Activated T-helper 1 cell treated with anti-CD3 and anti-CD28 coated beads, Interleukin-12 subunit alpha, Interleukin-12 subunit beta, Interleukin-2, Interleukin-4 antibody, amounts not matched to agents 30 ng/mL and 10 ng/mL and 1 ng/mL, durations not matched to agents 14 hours and 24 hours and 36 hours (primary cell): ENCODE measurements at regions of chr6 and their contacts with region 1.

Region 1: DNA sequence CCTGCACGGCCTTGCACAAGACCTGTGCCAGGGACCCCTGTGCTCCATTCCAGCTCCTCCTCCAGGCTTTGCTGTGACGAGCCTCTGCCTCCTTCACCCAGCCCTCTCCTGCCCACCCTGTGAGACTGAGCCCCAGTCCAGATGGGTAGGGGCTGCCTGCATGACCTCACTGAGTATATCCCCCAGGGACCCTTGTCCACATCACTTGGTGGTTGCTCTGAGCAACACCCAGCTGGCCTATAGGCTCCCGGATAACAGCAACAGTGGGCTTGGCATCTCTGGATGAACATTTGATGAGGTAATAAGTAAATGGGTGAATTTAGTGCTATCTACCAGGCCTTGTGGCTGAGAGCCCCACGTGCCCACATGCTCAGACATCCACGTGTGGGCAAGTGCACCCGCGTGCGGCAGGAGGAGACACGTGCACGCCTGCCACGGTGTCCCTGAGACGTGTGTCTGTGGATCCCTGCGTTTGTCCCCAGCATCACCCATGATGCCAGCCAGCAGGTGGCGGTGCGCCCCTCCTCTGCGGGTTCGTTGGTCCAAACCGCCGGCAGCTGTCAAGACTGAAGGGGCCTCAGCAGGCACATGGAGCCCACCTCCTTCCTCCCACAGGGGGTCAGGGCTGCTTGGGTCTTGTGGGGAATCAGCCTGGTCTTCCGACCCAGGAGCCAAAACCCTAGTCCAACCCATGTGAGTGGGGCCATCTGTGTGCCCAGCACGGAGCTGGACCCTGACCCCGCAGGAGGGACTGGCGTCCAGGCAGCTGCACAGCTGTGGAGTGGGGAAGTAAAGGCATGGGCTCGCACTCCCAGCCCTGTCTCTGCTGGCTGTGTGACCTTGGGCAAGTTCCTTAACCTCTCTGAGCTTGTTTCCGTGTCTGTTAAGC is 45.9 kb downstream of the FGD2 start:
- DNase-seq: peak; percentile 82
- H3K4me3 Mint-ChIP-seq: peak overlapping the region; percentile 92
- H3K27ac Mint-ChIP-seq: peak overlapping the region; percentile 99
- H3K4me1 Mint-ChIP-seq: peaks cover 70% of the 10 kb centered on the region
- H3K27me3 Mint-ChIP-seq: no peaks in the 10 kb centered on the region

Region 2: DNA sequence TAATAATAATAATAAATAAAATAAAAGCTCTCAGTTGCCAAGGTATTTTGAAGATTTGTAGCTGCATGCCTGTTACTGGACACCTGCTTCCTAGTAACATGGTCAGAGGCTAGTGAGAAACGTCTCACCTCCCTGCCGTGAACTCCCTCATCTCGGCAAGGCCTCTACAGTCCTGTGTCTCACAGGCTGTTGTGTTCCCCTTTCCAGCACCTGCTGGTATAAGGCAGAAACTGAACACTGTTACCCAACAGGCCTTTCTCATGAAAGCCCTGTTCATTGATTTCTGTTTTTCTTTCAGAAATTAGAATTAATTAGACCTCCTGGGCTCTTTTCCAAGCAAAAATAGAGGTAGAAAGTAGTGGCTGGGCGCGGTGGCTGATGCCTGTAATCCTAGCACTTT is 474.8 kb before region 1 on chr6:
- intact Hi-C with region 1: no loop called
- DNase-seq: no peak
- H3K4me3 Mint-ChIP-seq: no peak overlapping the region
- H3K27ac Mint-ChIP-seq: no peak overlapping the region
- H3K4me1 Mint-ChIP-seq: no peaks in the 10 kb centered on the region
- H3K27me3 Mint-ChIP-seq: no peaks in the 10 kb centered on the region

Region 3: GRCh38 chr6:36985808-36986703 is 65.3 kb before region 1 on chr6 and contains the start of gene MTCH1:
- intact Hi-C with region 1: loop called (anchors 2 kb)
- DNase-seq: peak; percentile 87
- H3K4me3 Mint-ChIP-seq: peak within 1 kb of the TSS; percentile 99
- H3K27ac Mint-ChIP-seq: peak within 1 kb of the TSS; percentile 99
- H3K4me1 Mint-ChIP-seq: peaks cover 27% of the 10 kb centered on the region
- H3K27me3 Mint-ChIP-seq: peaks cover 10% of the 10 kb centered on the region
- total RNA-seq, gene MTCH1: 120 and 127 TPM in 2 replicates

Region 4: DNA sequence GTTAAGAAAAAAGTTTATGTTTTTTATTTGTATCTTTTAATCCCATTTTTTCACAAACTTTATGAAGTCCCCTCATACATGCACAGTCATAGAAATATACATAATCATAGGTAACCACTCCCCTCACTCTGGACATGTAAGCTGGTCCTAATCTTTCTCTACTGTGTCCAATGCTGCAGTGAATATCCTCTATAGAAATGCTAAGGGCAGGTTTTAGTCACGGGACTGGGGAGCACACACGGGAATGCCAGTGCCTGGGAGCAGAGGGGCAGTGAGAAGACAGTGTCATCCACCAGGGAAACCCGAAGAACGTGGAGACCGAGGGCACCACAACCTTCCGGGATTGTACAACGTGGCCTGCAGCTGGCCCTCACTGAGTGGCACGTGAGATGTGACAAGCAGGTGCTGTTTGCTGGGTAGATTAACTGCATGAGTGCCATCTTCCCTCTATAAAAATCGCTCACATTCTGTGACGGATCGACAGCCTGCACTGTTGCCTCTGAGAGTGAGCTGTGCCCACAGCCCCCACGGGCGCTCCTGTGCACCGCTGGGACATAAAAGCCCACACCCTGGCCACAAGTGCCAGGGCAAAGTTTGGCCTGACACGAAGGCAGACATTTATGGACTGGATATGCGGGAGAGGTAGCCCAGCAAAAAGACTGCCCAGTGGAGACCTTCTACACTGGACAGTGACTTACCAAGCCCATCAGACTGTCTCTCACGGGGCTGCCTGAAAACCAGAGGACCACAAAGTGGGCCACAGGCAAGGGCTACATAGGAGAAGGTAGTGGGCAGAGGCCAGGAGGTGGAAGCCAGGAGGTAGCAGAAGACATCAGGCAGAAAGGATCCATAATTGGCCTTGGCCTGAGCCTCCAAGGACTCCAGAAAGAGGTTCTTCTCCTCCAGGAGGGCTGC is 17.2 kb after region 1 on chr6:
- intact Hi-C with region 1: loop called (anchors 2 kb)
- DNase-seq: no peak
- H3K4me3 Mint-ChIP-seq: no peak overlapping the region
- H3K27ac Mint-ChIP-seq: no peak overlapping the region
- H3K4me1 Mint-ChIP-seq: peaks cover 40% of the 10 kb centered on the region
- H3K27me3 Mint-ChIP-seq: peaks cover 2% of the 10 kb centered on the region

Region 5: GRCh38 chr6:37110500-37111461 is 59.4 kb after region 1 on chr6:
- intact Hi-C with region 1: loop called (anchors 1 kb)
- DNase-seq: peak; percentile 34
- H3K4me3 Mint-ChIP-seq: peak overlapping the region; percentile 48
- H3K27ac Mint-ChIP-seq: peak overlapping the region; percentile 82
- H3K4me1 Mint-ChIP-seq: peaks cover 38% of the 10 kb centered on the region
- H3K27me3 Mint-ChIP-seq: no peaks in the 10 kb centered on the region

Region 6: DNA sequence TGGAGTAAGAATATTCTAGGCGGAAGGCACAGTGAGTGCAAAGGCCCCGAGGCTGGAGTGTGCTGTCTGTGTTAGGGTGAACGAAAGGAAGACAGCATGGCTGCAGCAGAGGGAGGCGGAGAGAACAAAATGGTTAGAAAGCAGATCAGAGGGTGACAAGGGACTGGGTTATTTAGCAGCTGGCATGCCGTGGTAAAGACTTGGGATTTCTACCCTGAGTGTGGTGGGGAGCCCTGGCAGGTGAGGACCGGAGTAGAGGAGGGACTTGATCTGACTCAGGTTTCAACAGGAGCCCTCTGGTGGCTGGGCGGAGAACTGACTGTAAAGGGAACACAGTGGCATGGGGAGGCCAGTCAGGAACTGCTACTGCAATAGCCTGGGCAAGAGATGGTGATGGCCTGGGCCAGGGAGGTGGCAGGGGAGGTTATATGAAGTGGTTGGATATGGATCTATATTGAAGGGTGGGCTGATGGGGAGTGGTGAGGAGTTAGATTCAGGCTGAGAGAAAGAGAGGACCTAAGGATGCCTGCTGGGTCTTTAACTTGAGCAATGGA is 156.6 kb after region 1 on chr6:
- intact Hi-C with region 1: loop called (anchors 1 kb)
- DNase-seq: peak; percentile 83
- H3K4me3 Mint-ChIP-seq: peak overlapping the region; percentile 37
- H3K27ac Mint-ChIP-seq: peak overlapping the region; percentile 86
- H3K4me1 Mint-ChIP-seq: peaks cover 61% of the 10 kb centered on the region
- H3K27me3 Mint-ChIP-seq: no peaks in the 10 kb centered on the region

Region 7: DNA sequence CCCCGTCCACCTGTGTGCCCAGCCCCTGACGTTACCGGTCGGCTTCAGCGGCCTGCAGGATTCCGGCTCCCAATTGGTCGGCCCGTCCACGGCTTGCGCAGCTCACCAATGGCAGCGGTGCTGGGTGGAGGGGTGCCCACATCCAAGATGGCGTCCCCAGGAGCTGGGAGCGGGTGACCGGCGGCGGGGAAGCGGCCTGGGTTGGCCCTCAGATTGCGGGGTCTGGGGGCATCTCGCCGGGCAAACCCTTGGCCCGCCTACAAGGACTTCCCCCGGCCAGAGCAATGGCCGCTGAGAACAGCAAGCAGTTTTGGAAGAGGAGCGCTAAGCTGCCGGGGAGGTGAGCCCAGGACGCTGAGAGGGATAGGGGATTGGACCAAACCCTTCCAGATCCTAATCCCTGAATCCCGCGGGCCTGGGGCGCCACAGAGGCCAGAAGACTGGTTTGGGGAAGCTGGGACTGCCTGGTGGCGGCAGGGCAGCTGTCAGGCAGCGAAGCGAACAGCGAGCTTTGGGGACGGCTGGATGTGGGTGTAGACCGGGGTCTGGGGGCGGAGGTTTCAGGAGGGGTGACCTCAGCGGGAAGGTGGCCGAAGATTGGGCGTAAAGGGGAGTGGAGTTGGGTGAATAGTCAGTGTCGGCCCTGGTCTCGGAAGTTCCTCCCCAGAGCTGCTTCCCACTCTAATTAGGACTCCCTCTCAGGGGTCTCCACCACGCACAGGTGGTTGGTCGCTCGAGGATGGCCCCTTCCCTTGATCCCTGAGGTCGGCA is 206.4 kb after region 1 on chr6 and contains the starts of genes TBC1D22B and TMEM217:
- intact Hi-C with region 1: loop called (anchors 1 kb)
- DNase-seq: peak; percentile 95
- H3K4me3 Mint-ChIP-seq: peak within 1 kb of the TSS; percentile 97
- H3K27ac Mint-ChIP-seq: peak within 1 kb of the TSS; percentile 100
- H3K4me1 Mint-ChIP-seq: peaks cover 78% of the 10 kb centered on the region
- H3K27me3 Mint-ChIP-seq: no peaks in the 10 kb centered on the region
- total RNA-seq, gene TBC1D22B: 20.8 and 21.2 TPM in 2 replicates
- total RNA-seq, gene TMEM217: 7.7 and 9.9 TPM in 2 replicates